Left ventricle myocardium superior (tissue), 1 donor: ENCODE measurements at regions of chr10 and their contacts with region 1.

Region 1: GRCh38 chr10:89217057-89217990 is 10.2 kb upstream of the CH25H start:
- DNase-seq: peak; percentile 53
- ATAC-seq: peak; percentile 51

Region 2: DNA sequence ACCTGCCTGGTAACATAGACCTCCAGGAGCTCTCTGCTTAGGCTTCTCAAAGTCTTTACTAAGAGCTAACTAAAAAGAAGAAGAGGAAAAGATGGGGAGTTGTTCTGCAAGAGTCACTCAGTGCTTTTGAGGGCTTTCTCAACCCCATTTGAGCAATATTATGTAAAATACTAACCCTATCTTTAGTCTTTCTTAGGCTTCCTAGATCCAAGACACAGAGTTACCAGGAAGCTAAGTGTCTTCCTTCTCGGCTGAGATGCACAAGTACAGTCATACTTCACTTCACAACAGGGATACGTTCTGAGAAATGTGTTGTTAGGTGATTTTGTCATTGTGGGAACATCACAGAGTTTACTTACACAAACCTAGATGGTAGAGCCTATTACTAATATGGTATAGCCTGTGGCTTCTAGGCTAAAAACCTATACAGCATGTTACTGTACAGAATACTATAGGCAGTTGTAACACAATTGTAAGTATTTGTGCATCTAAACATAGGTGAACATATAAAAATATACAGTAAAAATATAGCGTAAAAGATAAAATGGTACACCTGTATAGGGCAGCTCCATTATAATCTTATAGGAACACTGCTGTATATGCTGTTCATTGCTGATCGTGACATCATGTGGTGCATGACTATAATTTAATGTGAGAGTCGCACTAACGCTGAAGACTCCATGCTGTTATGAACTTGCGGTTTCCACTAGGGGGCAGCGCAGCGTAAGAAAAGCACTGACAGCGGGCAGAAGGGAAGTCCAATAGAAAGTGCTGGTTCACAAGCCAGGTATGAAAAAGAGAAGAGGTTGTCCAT is 382.0 kb before region 1 on chr10:
- intact Hi-C with region 1: loop called (anchors 5 kb)
- DNase-seq: peak; percentile 81
- ATAC-seq: peak; percentile 96

Region 3: GRCh38 chr10:88932539-88933256 is 284.6 kb before region 1 on chr10:
- intact Hi-C with region 1: loop called (anchors 5 kb)
- DNase-seq: no peak
- ATAC-seq: peak; percentile 75

Region 4: GRCh38 chr10:89029785-89030437 is 187.4 kb before region 1 on chr10:
- intact Hi-C with region 1: loop called (anchors 2 kb)
- DNase-seq: peak; percentile 73
- ATAC-seq: peak; percentile 71

Region 5: DNA sequence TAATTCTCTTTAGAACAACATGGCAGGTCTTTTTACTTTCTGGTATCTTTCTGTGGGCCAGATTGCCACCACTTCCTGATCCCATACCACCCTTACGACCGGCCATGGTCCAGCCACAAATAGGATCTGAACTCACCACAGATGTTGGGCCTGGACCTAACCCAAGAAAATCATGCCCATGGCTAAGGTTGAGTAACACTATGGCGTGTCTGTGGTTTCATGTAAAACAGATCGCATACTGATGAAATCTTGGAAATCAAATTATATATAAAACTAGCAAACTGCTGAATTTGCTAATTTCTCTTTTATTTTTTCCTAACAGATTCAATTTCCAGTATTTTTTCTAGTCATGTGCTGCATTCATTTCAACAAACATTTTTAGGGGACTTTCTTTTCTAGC is 87.4 kb before region 1 on chr10:
- intact Hi-C with region 1: no loop called
- DNase-seq: no peak
- ATAC-seq: peak; percentile 27